ENCODE measurements at regions of chr7 and their contacts with region 1.

Region 1: GRCh38 chr7:7051206-7051877 is 131.0 kb upstream of the C1GALT1 start:
- DNase-seq: no peak
- H3K4me3 ChIP-seq: no peak overlapping the region
- H3K27ac ChIP-seq: no peak overlapping the region
- H3K4me1 ChIP-seq: no peaks in the 10 kb centered on the region
- H3K27me3 ChIP-seq: no peaks in the 10 kb centered on the region
- CTCF ChIP-seq: no peak

Region 2: DNA sequence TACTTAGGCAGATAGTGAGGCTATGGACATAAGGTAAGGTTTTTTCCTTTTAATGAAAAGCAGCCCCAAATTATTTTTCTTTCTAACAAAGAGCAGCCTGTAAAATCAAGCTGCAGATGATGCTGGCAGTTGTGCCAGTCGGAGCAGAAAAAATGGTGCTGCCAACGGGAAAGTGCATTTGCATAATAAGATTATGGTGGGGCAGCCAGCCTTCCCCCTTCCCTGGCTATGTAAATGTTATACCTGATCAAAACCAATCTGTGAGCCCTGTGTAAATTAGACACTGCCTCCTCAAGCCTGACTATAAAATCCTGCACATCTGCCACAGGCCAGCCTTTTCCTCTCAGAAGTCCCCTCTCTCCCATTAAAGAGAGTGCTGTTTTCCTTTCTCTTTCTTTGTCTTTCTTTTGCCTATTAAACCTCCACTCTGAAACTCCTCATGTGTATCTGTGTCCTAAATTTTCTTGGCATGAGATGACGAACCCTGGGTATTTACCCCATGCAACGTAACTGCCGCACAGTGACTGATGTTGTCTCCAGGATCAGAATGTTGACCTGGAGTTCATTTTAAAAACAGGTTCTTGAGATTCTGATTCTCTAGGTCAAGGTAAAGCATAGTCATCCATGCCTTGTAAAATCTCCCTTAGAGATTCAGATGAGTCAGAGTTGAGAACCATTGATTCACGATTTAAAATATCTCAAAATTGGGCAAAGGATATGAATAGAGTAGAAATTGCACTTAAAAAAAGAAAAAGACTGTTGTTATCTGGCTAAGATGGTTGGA is 36.3 kb before region 1 on chr7:
- CTCF ChIA-PET with region 1: no interaction called
- dilution Hi-C with region 1: loop called (anchors 5 kb)
- in situ Hi-C with region 1: no loop called
- intact Hi-C with region 1: no loop called
- DNase-seq: peak; percentile 8
- H3K4me3 ChIP-seq: no peak overlapping the region
- H3K27ac ChIP-seq: no peak overlapping the region
- H3K4me1 ChIP-seq: no peaks in the 10 kb centered on the region
- H3K27me3 ChIP-seq: no peaks in the 10 kb centered on the region
- CTCF ChIP-seq: no peak